Activated T-helper 1 cell treated with anti-CD3 and anti-CD28 coated beads, Interleukin-12 subunit alpha, Interleukin-12 subunit beta, Interleukin-2, Interleukin-4 antibody, amounts not matched to agents 30 ng/mL and 10 ng/mL and 1 ng/mL, durations not matched to agents 14 hours and 24 hours and 36 hours (primary cell): ENCODE measurements at regions of chr4 and their contacts with region 1.

Region 1: GRCh38 chr4:7960790-7961655 is 21.4 kb upstream of the AFAP1 start:
- DNase-seq: peak; percentile 70
- H3K4me3 Mint-ChIP-seq: peak overlapping the region; percentile 3
- H3K27ac Mint-ChIP-seq: peak overlapping the region; percentile 73
- H3K4me1 Mint-ChIP-seq: peaks cover 66% of the 10 kb centered on the region
- H3K27me3 Mint-ChIP-seq: peaks cover 4% of the 10 kb centered on the region

Region 2: GRCh38 chr4:6709230-6710114 is 1251.6 kb before region 1 on chr4 and contains the start of gene MRFAP1L1:
- intact Hi-C with region 1: loop called (anchors 10 kb)
- DNase-seq: peak; percentile 95
- H3K4me3 Mint-ChIP-seq: peak within 1 kb of the TSS; percentile 98
- H3K27ac Mint-ChIP-seq: peak within 1 kb of the TSS; percentile 95
- H3K4me1 Mint-ChIP-seq: peaks cover 62% of the 10 kb centered on the region
- H3K27me3 Mint-ChIP-seq: peaks cover 3% of the 10 kb centered on the region
- total RNA-seq, gene MRFAP1L1: 51.7 and 53.9 TPM in 2 replicates

Region 3: DNA sequence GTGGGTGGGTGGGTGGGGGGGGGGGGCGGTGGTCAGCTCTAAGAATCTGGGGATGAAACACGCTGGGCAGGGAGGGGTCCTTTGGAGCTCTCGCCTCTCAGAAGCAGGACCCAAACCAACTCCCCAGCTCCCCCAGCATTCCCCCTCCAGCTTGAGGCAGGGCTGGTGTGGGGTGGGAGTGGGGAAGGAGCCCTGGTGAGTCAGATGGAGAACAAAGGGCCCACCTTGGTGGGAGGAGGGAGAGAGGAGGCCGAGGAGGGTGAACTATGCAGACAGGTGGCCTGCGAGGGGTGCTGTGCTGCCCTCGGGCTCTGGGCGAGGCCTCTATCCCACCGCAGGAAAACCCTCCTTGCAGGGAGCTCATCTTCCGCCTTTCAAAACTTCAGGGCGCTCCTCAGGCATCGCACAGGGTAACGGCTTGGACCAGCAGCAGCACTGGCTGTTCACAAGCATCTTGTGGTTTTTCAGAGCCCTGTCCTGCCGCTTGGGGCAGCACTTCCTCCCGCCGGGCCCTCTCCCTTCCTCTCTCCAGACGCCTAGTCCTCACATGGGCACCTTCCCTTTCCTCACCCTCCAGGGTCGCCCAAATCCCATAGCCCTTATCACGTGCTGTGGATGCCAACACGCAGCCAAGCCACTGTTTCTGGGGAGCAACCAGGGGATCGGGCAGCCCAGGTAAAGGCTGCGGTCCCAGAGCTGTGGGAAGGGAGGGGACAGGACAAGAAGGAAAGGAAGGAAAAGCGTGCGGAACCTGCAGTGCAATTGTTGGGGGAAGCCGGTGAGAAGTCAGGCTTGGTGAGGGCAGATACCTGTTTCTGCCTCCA is 859.1 kb before region 1 on chr4:
- intact Hi-C with region 1: loop called (anchors 10 kb)
- DNase-seq: peak; percentile 29
- H3K4me3 Mint-ChIP-seq: peak overlapping the region; percentile 89
- H3K27ac Mint-ChIP-seq: no peak overlapping the region
- H3K4me1 Mint-ChIP-seq: peaks cover 14% of the 10 kb centered on the region
- H3K27me3 Mint-ChIP-seq: peaks cover 15% of the 10 kb centered on the region

Region 4: GRCh38 chr4:7857238-7857701 is 103.8 kb before region 1 on chr4:
- intact Hi-C with region 1: loop called (anchors 1 kb)
- DNase-seq: no peak
- H3K4me3 Mint-ChIP-seq: peak overlapping the region; percentile 54
- H3K27ac Mint-ChIP-seq: peak overlapping the region; percentile 93
- H3K4me1 Mint-ChIP-seq: peaks cover 60% of the 10 kb centered on the region
- H3K27me3 Mint-ChIP-seq: peaks cover 16% of the 10 kb centered on the region

Region 5: GRCh38 chr4:7939377-7940108 is 21.5 kb before region 1 on chr4 and contains the start of gene AFAP1:
- intact Hi-C with region 1: loop called (anchors 1 kb)
- DNase-seq: peak; percentile 85
- H3K4me3 Mint-ChIP-seq: peak within 1 kb of the TSS; percentile 74
- H3K27ac Mint-ChIP-seq: no peak within 1 kb of the TSS
- H3K4me1 Mint-ChIP-seq: peaks cover 22% of the 10 kb centered on the region
- H3K27me3 Mint-ChIP-seq: peaks cover 25% of the 10 kb centered on the region
- total RNA-seq, gene AFAP1: 48.3 and 48.4 TPM in 2 replicates

Region 6: GRCh38 chr4:7973545-7973981 is 12.5 kb after region 1 on chr4:
- intact Hi-C with region 1: loop called (anchors 1 kb)
- DNase-seq: no peak
- H3K4me3 Mint-ChIP-seq: peak overlapping the region; percentile 99
- H3K27ac Mint-ChIP-seq: peak overlapping the region; percentile 83
- H3K4me1 Mint-ChIP-seq: peaks cover 53% of the 10 kb centered on the region
- H3K27me3 Mint-ChIP-seq: no peaks in the 10 kb centered on the region